ENCODE measurements at regions of chr7 and their contacts with region 1.

Region 1: DNA sequence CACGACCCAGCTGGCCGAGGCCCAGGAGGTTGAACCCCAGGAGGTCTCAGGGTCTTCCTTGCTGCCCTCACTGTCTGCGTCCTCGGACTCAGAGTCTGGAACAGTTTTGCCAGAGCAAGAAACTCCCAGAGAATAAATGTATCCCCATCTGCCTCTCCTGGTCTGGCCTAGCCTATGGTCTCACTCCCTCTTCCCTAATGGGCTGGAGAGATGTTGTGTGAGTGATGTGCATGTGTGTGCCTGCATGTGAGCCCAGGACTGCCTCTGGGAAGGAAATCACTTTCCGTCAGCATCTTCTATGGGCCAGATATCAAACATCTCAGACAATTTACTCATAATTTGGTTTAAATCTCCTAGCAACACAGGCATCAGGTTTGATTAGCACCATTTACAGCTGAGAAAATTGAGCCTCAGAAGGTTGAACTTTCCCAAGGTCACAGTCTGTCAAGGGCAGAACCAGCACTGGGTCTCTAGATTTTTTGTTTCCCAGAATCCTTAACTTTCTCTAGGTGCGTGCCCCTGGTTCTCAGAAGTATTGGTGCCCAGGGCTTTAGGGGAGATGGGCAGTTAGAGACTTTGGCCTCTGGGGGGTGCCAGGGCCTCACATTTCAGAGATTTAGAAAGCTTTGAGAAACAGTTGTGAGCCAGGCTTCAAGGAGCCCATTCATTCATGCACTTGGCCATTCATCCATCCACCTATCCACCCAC is 4.9 kb downstream of the TMEM270 start:
- DNase-seq: peak; percentile 64 to 79 (median 70)
- H3K4me3 ChIP-seq: no peak overlapping the region
- H3K27ac ChIP-seq: no peak overlapping the region
- H3K4me1 ChIP-seq: no peaks in the 10 kb centered on the region
- H3K27me3 ChIP-seq: no peaks in the 10 kb centered on the region

Region 2: DNA sequence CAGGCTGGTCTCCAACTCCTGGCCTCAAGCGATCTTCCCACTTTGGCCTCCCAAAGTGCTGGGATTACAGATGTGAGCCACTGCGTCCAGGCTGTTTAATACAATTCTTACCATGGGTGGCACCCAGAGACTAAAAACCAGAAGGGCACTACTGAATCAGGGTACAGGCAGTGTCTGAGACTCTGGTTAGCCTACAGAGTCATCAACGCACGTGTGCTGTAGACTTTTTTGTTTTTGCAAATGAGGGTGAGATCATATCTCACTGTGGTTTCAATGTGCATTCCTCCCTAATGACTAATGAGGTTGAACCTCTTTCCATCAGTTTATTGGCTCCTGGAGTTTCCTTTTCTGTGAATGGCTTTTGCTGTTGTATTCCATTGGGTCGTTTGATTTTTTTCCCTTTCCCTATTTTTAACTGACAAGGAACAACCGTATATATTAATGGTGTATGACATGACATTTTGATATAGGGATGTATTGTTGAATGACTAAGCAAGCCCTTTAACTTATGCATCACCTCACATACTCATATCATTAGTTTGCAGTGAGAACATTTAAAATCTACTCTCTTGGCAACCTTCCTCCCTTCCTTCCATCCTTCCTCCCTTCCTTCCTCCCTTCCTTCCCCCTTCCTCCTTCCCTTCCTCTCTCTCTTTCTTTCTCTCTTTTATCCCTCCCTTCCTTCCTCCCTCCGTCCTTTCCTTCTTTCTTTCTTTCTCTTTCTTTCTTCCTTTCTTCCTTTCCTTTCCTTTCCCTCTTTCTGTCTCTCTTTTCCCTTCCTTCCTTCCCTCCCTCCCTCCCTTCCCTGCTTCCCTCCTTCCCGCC is 14.3 kb before region 1 on chr7:
- CTCF ChIA-PET with region 1: interaction called, 21 read pairs
- POLR2A ChIA-PET with region 1: no interaction called
- DNase-seq: peak; percentile 73 to 92 (median 88)
- H3K4me3 ChIP-seq: no peak overlapping the region
- H3K27ac ChIP-seq: no peak overlapping the region
- H3K4me1 ChIP-seq: peaks cover 0 to 17% (median 9%) of the 10 kb centered on the region in 4 experiments
- H3K27me3 ChIP-seq: peaks cover 0 to 15% (median 9%) of the 10 kb centered on the region in 5 experiments

Region 3: GRCh38 chr7:73879977-73880681 is 14.2 kb after region 1 on chr7:
- CTCF ChIA-PET with region 1: interaction called, 14 read pairs
- POLR2A ChIA-PET with region 1: interaction called, 3 read pairs
- DNase-seq: no peak
- H3K4me3 ChIP-seq: no peak overlapping the region
- H3K27ac ChIP-seq: no peak overlapping the region
- H3K4me1 ChIP-seq: peaks cover 0 to 7% (median 2%) of the 10 kb centered on the region in 4 experiments
- H3K27me3 ChIP-seq: no peaks in the 10 kb centered on the region

Region 4: DNA sequence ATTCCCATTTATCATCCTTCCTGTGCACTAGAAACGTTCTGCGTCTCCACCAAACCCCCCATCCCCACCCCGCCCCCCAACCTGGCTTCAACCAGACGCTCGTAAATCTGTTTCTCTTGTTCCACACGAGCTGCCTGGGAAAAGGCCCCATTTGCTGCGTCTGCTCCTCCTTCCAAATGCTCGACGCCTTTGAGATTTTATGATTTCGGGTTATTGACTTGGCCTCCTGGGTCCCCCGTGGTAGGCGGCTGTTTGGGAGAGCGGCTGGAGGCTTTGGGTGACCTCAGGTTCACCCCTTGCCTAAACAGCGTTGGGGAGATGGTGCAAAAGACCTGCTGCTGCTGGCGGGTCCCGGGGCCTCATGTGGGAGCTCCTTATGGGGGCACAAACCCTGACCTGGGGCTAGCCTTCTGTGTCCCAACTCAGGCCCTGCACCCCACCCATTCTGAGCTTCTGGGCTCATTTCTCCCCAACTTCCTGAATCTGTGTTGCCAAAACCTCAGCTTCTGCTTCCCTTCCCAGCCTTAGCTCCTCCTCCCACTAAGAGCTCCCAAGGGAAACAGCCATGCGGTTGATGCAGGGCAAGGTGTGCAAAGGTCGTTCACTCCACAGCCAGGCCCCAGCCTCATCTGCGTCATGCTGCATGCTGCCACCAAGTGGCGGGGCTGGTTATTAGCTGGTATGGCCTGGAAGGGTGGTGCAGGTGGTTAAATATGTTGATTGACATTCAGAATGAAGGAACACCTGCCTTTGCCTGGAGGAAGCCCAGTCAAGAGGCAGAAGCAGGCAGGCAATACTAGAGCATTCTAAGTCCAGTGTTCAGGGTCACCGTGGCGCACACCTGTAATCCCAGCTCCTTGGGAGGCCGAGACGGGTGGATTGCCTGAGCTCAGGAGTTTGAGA is 113.0 kb after region 1 on chr7:
- CTCF ChIA-PET with region 1: interaction called, 34 read pairs
- POLR2A ChIA-PET with region 1: no interaction called
- DNase-seq: peak; percentile 59 to 78 (median 74)
- H3K4me3 ChIP-seq: peak overlapping the region in 1 of 7 experiments; percentile 22
- H3K27ac ChIP-seq: no peak overlapping the region
- H3K4me1 ChIP-seq: peaks cover 0 to 24% (median 20%) of the 10 kb centered on the region in 4 experiments
- H3K27me3 ChIP-seq: no peaks in the 10 kb centered on the region

Region 5: GRCh38 chr7:74068393-74069085 is 202.6 kb after region 1 on chr7:
- CTCF ChIA-PET with region 1: interaction called, 15 read pairs
- POLR2A ChIA-PET with region 1: interaction called, 3 read pairs
- DNase-seq: no peak
- H3K4me3 ChIP-seq: no peak overlapping the region
- H3K27ac ChIP-seq: no peak overlapping the region
- H3K4me1 ChIP-seq: no peaks in the 10 kb centered on the region
- H3K27me3 ChIP-seq: no peaks in the 10 kb centered on the region